Natural killer cell (primary cell): ENCODE measurements at regions of chr3 and their contacts with region 1.

Region 1: DNA sequence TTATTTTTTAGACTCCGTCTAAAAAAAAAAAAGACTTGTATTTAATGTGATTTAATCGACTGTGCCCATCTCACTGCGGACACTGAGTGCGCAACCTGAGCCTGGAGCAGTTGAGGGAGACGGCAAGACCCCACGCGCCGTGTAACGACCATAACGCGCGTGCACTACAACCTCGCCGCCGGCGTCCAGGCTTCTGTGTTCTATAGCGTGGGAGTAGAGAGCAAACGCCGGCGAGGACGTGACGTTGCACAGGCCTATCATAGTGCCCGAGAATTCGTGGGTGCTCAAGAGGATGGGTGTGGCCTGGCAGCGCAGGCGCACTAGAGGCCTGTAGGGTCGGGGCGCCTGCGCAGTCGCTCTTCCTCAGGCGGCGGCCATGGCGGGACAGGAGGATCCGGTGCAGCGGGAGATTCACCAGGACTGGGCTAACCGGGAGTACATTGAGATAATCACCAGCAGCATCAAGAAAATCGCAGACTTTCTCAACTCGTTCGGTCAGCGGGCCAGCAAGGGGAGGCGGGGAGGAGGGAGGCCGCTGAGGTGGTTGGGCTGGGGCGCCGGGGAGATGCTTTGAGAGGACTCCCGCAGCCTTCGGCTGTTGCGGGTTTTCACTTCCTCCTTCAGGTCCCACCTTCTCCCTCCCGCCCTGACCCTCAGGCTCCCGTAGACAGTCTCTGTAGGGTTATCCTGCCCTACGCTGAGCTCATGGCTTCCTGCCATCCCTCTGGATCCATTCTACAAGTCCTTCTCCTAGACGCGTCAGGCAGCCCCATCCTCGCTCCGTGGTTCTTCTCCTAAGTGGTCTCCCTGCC is at the start of gene BRK1:
- DNase-seq: peak; percentile 83 to 98
- ATAC-seq: peak; percentile 97 to 100 (median 98)
- H3K4me3 ChIP-seq: peak within 1 kb of the TSS; percentile 92
- H3K4me3 Mint-ChIP-seq: peak within 1 kb of the TSS; percentile 99
- H3K27ac ChIP-seq: peak within 1 kb of the TSS; percentile 78
- H3K27ac Mint-ChIP-seq: peak within 1 kb of the TSS; percentile 97 to 98
- H3K4me1 ChIP-seq: peaks cover 25% of the 10 kb centered on the region
- H3K4me1 Mint-ChIP-seq: peaks cover 20 to 24% of the 10 kb centered on the region in 2 donors
- H3K27me3 ChIP-seq: no peaks in the 10 kb centered on the region
- H3K27me3 Mint-ChIP-seq: no peaks in the 10 kb centered on the region
- CTCF ChIP-seq: no peak
- total RNA-seq, gene BRK1: 65.8 to 78.5 (median 75.0) TPM

Region 2: GRCh38 chr3:9843715-9844438 is 271.7 kb before region 1 on chr3 and contains the start of gene RPUSD3:
- intact Hi-C with region 1: loop called (anchors 5 kb)
- DNase-seq: peak; percentile 98 to 99
- ATAC-seq: peak; percentile 99 to 100 (median 99)
- H3K4me3 ChIP-seq: peak within 1 kb of the TSS; percentile 99
- H3K4me3 Mint-ChIP-seq: peak within 1 kb of the TSS; percentile 99
- H3K27ac ChIP-seq: peak within 1 kb of the TSS; percentile 68
- H3K27ac Mint-ChIP-seq: peak within 1 kb of the TSS; percentile 96
- H3K4me1 ChIP-seq: peaks cover 18% of the 10 kb centered on the region
- H3K4me1 Mint-ChIP-seq: peaks cover 22 to 24% of the 10 kb centered on the region in 2 donors
- H3K27me3 ChIP-seq: no peaks in the 10 kb centered on the region
- H3K27me3 Mint-ChIP-seq: no peaks in the 10 kb centered on the region
- CTCF ChIP-seq: no peak
- total RNA-seq, gene RPUSD3: 27.5 to 43.9 (median 30.9) TPM

Region 3: GRCh38 chr3:10140996-10141546 is 25.5 kb after region 1 on chr3:
- intact Hi-C with region 1: loop called (anchors 1 kb)
- DNase-seq: no peak
- ATAC-seq: no peak
- H3K4me3 ChIP-seq: peak overlapping the region; percentile 75
- H3K4me3 Mint-ChIP-seq: peak overlapping the region; percentile 97
- H3K27ac ChIP-seq: peak overlapping the region; percentile 90
- H3K27ac Mint-ChIP-seq: peak overlapping the region; percentile 89 to 98
- H3K4me1 ChIP-seq: peaks cover 34% of the 10 kb centered on the region
- H3K4me1 Mint-ChIP-seq: peaks cover 28 to 32% of the 10 kb centered on the region in 2 donors
- H3K27me3 ChIP-seq: no peaks in the 10 kb centered on the region
- H3K27me3 Mint-ChIP-seq: no peaks in the 10 kb centered on the region
- CTCF ChIP-seq: no peak

Region 4: GRCh38 chr3:10224784-10225665 is 109.5 kb after region 1 on chr3:
- intact Hi-C with region 1: loop called (anchors 2 kb)
- DNase-seq: peak; percentile 50 to 83
- ATAC-seq: peak; percentile 74 to 78 (median 77)
- H3K4me3 ChIP-seq: no peak overlapping the region
- H3K4me3 Mint-ChIP-seq: peak overlapping the region; percentile 74
- H3K27ac ChIP-seq: no peak overlapping the region
- H3K27ac Mint-ChIP-seq: peak overlapping the region; percentile 74 to 92
- H3K4me1 ChIP-seq: peaks cover 61% of the 10 kb centered on the region
- H3K4me1 Mint-ChIP-seq: peaks cover 46 to 53% of the 10 kb centered on the region in 2 donors
- H3K27me3 ChIP-seq: no peaks in the 10 kb centered on the region
- H3K27me3 Mint-ChIP-seq: no peaks in the 10 kb centered on the region
- CTCF ChIP-seq: peak; percentile 76

Region 5: GRCh38 chr3:10248184-10249080 is 132.9 kb after region 1 on chr3 and contains the start of gene TATDN2:
- intact Hi-C with region 1: loop called (anchors 5 kb)
- DNase-seq: peak; percentile 81 to 98
- ATAC-seq: peak; percentile 94 to 98 (median 94)
- H3K4me3 ChIP-seq: peak within 1 kb of the TSS; percentile 68
- H3K4me3 Mint-ChIP-seq: peak within 1 kb of the TSS; percentile 97
- H3K27ac ChIP-seq: peak within 1 kb of the TSS; percentile 41
- H3K27ac Mint-ChIP-seq: peak within 1 kb of the TSS; percentile 90 to 95
- H3K4me1 ChIP-seq: peaks cover 30% of the 10 kb centered on the region
- H3K4me1 Mint-ChIP-seq: peaks cover 57 to 61% of the 10 kb centered on the region in 2 donors
- H3K27me3 ChIP-seq: no peaks in the 10 kb centered on the region
- H3K27me3 Mint-ChIP-seq: no peaks in the 10 kb centered on the region
- CTCF ChIP-seq: no peak
- total RNA-seq, gene TATDN2: 75.6 to 99.4 (median 88.4) TPM

Region 6: GRCh38 chr3:10322352-10322710 is 206.8 kb after region 1 on chr3:
- intact Hi-C with region 1: loop called (anchors 5 kb)
- DNase-seq: peak in 1 of 2 donors; percentile 44
- ATAC-seq: no peak
- H3K4me3 ChIP-seq: no peak overlapping the region
- H3K4me3 Mint-ChIP-seq: peak overlapping the region; percentile 90
- H3K27ac ChIP-seq: no peak overlapping the region
- H3K27ac Mint-ChIP-seq: peak overlapping the region in 1 of 2 donors; percentile 91
- H3K4me1 ChIP-seq: peaks cover 18% of the 10 kb centered on the region
- H3K4me1 Mint-ChIP-seq: peaks cover 25 to 28% of the 10 kb centered on the region in 2 donors
- H3K27me3 ChIP-seq: no peaks in the 10 kb centered on the region
- H3K27me3 Mint-ChIP-seq: peaks cover 0 to 22% of the 10 kb centered on the region in 2 donors
- CTCF ChIP-seq: peak; percentile 29